HEK293 (cell line): ENCODE measurements at regions of chr18 and their contacts with region 1.

Region 1: GRCh38 chr18:63858456-63858855 is 29.0 kb upstream of the SERPINB2 start:
- H3K4me3 ChIP-seq: no peak overlapping the region
- H3K27ac ChIP-seq: no peak overlapping the region
- H3K4me1 ChIP-seq: no peaks in the 10 kb centered on the region
- CTCF ChIP-seq: no peak

Region 2: GRCh38 chr18:63823518-63824219 is 34.8 kb before region 1 on chr18:
- CTCF ChIA-PET with region 1: interaction called, 13 read pairs
- POLR2A ChIA-PET with region 1: no interaction called
- H3K4me3 ChIP-seq: no peak overlapping the region
- H3K27ac ChIP-seq: no peak overlapping the region
- H3K4me1 ChIP-seq: no peaks in the 10 kb centered on the region
- CTCF ChIP-seq: peak; percentile 15; the same call in 1 of the 2 replicates

Region 3: DNA sequence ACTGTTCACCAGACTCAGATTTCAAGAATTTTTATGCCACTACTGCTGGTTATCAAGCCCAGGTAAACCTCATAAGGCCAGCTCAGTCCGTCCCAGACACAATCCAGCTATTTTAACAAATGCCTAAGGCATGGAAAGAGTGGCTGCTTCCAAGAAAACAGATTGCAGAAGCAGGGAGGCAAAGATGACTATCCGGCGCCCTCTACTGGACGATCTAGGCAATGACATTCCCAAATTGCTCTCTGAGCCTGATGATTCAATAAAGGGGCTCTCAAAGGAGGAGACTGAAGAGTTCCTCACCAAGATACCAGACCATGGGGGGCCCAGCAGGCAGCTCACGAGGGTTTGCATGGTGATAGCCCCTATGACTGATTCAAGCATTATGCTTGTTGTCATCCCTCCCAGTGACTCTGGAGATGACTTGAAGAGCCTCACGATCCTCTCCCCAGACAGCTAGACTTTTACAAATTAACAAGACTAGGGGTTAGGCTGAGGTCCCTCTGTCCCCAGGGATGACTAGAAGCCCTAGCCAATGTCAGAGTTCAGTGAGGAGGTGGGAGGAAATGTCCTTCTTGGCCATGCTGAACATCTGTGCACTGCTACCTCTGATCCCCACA is 136.4 kb after region 1 on chr18:
- CTCF ChIA-PET with region 1: no interaction called
- POLR2A ChIA-PET with region 1: no interaction called
- H3K4me3 ChIP-seq: no peak overlapping the region
- H3K27ac ChIP-seq: no peak overlapping the region
- H3K4me1 ChIP-seq: no peaks in the 10 kb centered on the region
- CTCF ChIP-seq: peak; percentile 48